ENCODE measurements at regions of chr6 and their contacts with region 1.

Region 1: DNA sequence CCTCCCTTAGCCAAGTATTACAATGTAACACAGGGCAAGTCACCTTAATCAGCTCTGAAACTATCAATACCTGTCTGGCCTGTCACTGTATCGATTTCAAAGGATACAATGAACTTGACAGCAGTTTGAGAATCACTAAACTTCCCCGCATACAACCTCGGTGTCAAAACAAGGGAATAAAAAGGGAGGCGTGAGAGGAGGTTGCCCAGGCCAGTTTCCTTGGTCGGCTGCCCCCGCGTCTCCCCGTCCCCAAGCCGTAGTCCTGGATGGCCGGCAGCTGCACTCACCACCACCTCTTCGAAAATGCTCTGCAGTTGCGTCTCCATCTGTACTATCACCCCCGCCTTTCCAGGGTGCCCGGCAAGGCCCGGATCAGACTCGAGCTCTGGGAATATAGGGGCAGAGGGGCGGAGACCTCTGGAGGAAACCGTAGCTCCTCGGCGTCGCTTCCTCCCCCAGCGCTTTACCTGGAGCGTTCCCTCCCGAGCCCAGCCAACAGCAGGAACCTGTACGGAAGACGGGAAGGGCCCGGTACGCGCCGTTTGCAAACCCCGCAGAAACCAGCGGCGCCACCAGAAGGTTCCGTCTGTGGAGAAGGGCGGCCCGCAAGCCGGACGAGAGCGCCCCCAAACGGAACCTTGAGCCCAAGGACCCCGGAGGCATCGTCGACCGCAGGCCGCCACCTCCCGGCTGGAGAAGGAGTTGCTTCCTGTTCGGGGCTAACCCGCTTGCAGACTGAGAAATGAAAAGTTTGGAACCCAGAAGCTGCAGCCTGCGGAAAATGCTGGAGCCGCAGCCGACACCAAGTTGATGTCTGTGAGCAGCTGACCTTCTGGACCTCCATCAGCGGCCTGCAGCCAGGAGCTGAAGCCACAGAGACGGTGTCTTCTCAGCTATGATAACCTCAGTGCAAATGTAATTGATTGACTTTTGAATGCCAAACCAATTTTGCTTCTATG is at the start of gene MED23:
- DNase-seq: peak; percentile 92 to 99 (median 95)
- ATAC-seq: peak; percentile 94
- H3K4me3 ChIP-seq: peak within 1 kb of the TSS; percentile 83 to 86
- H3K4me3 Mint-ChIP-seq: peak within 1 kb of the TSS; percentile 98
- H3K27ac ChIP-seq: peak within 1 kb of the TSS; percentile 62 to 72
- H3K27ac Mint-ChIP-seq: peak within 1 kb of the TSS; percentile 94
- H3K4me1 ChIP-seq: peaks cover 18% of the 10 kb centered on the region
- H3K4me1 Mint-ChIP-seq: peaks cover 32% of the 10 kb centered on the region
- H3K27me3 ChIP-seq: no peaks in the 10 kb centered on the region
- H3K27me3 Mint-ChIP-seq: no peaks in the 10 kb centered on the region
- CTCF ChIP-seq: peak; percentile 95
- total RNA-seq, gene MED23: 65.3 to 70.0 TPM

Region 2: DNA sequence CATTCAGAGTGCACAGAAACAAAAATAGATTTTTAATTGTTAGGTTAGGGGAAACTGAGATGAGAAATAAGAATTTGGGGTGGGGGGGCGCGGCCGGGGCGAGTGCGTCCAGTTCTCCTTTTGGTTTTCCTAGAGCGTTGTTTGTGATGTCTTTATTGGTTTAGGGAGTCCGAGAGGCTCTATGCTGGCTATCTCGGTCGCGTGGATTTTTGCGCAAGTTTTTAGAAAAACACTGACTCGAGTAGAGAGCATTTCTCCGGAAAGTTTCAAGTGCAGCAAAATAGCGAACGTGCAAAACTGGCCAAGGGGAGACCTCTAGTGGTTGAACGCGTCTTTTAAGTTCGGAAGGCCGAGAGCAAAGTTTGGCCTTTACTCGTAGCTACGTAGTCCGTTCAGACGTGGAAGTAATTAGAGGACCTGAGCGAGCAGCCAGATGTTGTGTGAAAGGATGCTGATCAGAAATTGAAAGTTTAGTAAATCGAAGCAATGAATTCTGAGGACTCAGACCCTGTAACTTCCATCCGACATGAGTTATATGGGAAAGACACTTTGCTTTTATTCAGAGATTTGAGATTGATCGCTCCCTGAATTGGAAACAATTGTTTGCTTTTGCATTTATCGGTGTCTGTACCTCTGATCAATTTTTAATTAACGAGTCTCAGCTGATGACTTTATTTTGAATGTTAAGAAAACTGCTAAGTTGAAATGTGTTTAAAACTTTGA is 1606.9 kb before region 1 on chr6:
- CTCF ChIA-PET with region 1: no interaction called
- POLR2A ChIA-PET with region 1: no interaction called
- intact Hi-C with region 1: loop called in 1 of 2 experiments (anchors 5 kb)
- DNase-seq: peak; percentile 57 to 93 (median 78)
- ATAC-seq: peak; percentile 45
- H3K4me3 ChIP-seq: peak overlapping the region; percentile 61 to 85
- H3K4me3 Mint-ChIP-seq: peak overlapping the region; percentile 98
- H3K27ac ChIP-seq: peak overlapping the region; percentile 60 to 82
- H3K27ac Mint-ChIP-seq: peak overlapping the region; percentile 96
- H3K4me1 ChIP-seq: peaks cover 11% of the 10 kb centered on the region
- H3K4me1 Mint-ChIP-seq: peaks cover 43% of the 10 kb centered on the region
- H3K27me3 ChIP-seq: no peaks in the 10 kb centered on the region
- H3K27me3 Mint-ChIP-seq: no peaks in the 10 kb centered on the region
- CTCF ChIP-seq: peak; percentile 63

Region 3: GRCh38 chr6:131063028-131063763 is 564.8 kb before region 1 on chr6 and contains the start of gene EPB41L2:
- CTCF ChIA-PET with region 1: no interaction called
- POLR2A ChIA-PET with region 1: interaction called, 5 read pairs
- intact Hi-C with region 1: loop called (anchors 1 to 5 kb)
- DNase-seq: peak; percentile 55 to 92 (median 79)
- ATAC-seq: peak; percentile 91
- H3K4me3 ChIP-seq: peak within 1 kb of the TSS; percentile 57 to 80
- H3K4me3 Mint-ChIP-seq: peak within 1 kb of the TSS; percentile 89
- H3K27ac ChIP-seq: peak within 1 kb of the TSS in 1 of 2 experiments; percentile 49
- H3K27ac Mint-ChIP-seq: peak within 1 kb of the TSS; percentile 76
- H3K4me1 ChIP-seq: peaks cover 10% of the 10 kb centered on the region
- H3K4me1 Mint-ChIP-seq: peaks cover 27% of the 10 kb centered on the region
- H3K27me3 ChIP-seq: no peaks in the 10 kb centered on the region
- H3K27me3 Mint-ChIP-seq: no peaks in the 10 kb centered on the region
- CTCF ChIP-seq: peak; percentile 18
- total RNA-seq, gene EPB41L2: 11.0 to 12.0 TPM

Region 4: GRCh38 chr6:131182991-131183425 is 445.0 kb before region 1 on chr6:
- CTCF ChIA-PET with region 1: interaction called, 7 read pairs
- POLR2A ChIA-PET with region 1: interaction called, 3 read pairs
- intact Hi-C with region 1: loop called in 1 of 2 experiments (anchors 1 kb)
- DNase-seq: peak in 6 of 9 experiments; percentile 9 to 68 (median 40)
- ATAC-seq: peak; percentile 66
- H3K4me3 ChIP-seq: no peak overlapping the region
- H3K4me3 Mint-ChIP-seq: peak overlapping the region; percentile 69
- H3K27ac ChIP-seq: peak overlapping the region in 1 of 2 experiments; percentile 23
- H3K27ac Mint-ChIP-seq: peak overlapping the region; percentile 89
- H3K4me1 ChIP-seq: peaks cover 11% of the 10 kb centered on the region
- H3K4me1 Mint-ChIP-seq: peaks cover 13% of the 10 kb centered on the region
- H3K27me3 ChIP-seq: no peaks in the 10 kb centered on the region
- H3K27me3 Mint-ChIP-seq: no peaks in the 10 kb centered on the region
- CTCF ChIP-seq: peak; percentile 63

Region 5: GRCh38 chr6:131586543-131586942 is 41.5 kb before region 1 on chr6:
- CTCF ChIA-PET with region 1: interaction called, 9 read pairs
- POLR2A ChIA-PET with region 1: no interaction called
- intact Hi-C with region 1: loop called in 1 of 2 experiments (anchors 5 kb)
- DNase-seq: no peak
- ATAC-seq: no peak
- H3K4me3 ChIP-seq: no peak overlapping the region
- H3K4me3 Mint-ChIP-seq: no peak overlapping the region
- H3K27ac ChIP-seq: no peak overlapping the region
- H3K27ac Mint-ChIP-seq: no peak overlapping the region
- H3K4me1 ChIP-seq: no peaks in the 10 kb centered on the region
- H3K4me1 Mint-ChIP-seq: no peaks in the 10 kb centered on the region
- H3K27me3 ChIP-seq: no peaks in the 10 kb centered on the region
- H3K27me3 Mint-ChIP-seq: no peaks in the 10 kb centered on the region
- CTCF ChIP-seq: no peak

Region 6: GRCh38 chr6:131615275-131615674 is 12.7 kb before region 1 on chr6:
- CTCF ChIA-PET with region 1: interaction called, 25 read pairs
- POLR2A ChIA-PET with region 1: interaction called, 4 read pairs
- intact Hi-C with region 1: no loop called
- DNase-seq: no peak
- ATAC-seq: no peak
- H3K4me3 ChIP-seq: no peak overlapping the region
- H3K4me3 Mint-ChIP-seq: no peak overlapping the region
- H3K27ac ChIP-seq: no peak overlapping the region
- H3K27ac Mint-ChIP-seq: peak overlapping the region; percentile 73
- H3K4me1 ChIP-seq: no peaks in the 10 kb centered on the region
- H3K4me1 Mint-ChIP-seq: peaks cover 7% of the 10 kb centered on the region
- H3K27me3 ChIP-seq: no peaks in the 10 kb centered on the region
- H3K27me3 Mint-ChIP-seq: no peaks in the 10 kb centered on the region
- CTCF ChIP-seq: no peak

Region 7: GRCh38 chr6:132247381-132248159 is 619.6 kb after region 1 on chr6:
- CTCF ChIA-PET with region 1: no interaction called
- POLR2A ChIA-PET with region 1: no interaction called
- intact Hi-C with region 1: no loop called
- DNase-seq: no peak
- ATAC-seq: no peak
- H3K4me3 ChIP-seq: no peak overlapping the region
- H3K4me3 Mint-ChIP-seq: no peak overlapping the region
- H3K27ac ChIP-seq: no peak overlapping the region
- H3K27ac Mint-ChIP-seq: no peak overlapping the region
- H3K4me1 ChIP-seq: no peaks in the 10 kb centered on the region
- H3K4me1 Mint-ChIP-seq: no peaks in the 10 kb centered on the region
- H3K27me3 ChIP-seq: no peaks in the 10 kb centered on the region
- H3K27me3 Mint-ChIP-seq: peaks cover 9% of the 10 kb centered on the region
- CTCF ChIP-seq: no peak

Region 8: DNA sequence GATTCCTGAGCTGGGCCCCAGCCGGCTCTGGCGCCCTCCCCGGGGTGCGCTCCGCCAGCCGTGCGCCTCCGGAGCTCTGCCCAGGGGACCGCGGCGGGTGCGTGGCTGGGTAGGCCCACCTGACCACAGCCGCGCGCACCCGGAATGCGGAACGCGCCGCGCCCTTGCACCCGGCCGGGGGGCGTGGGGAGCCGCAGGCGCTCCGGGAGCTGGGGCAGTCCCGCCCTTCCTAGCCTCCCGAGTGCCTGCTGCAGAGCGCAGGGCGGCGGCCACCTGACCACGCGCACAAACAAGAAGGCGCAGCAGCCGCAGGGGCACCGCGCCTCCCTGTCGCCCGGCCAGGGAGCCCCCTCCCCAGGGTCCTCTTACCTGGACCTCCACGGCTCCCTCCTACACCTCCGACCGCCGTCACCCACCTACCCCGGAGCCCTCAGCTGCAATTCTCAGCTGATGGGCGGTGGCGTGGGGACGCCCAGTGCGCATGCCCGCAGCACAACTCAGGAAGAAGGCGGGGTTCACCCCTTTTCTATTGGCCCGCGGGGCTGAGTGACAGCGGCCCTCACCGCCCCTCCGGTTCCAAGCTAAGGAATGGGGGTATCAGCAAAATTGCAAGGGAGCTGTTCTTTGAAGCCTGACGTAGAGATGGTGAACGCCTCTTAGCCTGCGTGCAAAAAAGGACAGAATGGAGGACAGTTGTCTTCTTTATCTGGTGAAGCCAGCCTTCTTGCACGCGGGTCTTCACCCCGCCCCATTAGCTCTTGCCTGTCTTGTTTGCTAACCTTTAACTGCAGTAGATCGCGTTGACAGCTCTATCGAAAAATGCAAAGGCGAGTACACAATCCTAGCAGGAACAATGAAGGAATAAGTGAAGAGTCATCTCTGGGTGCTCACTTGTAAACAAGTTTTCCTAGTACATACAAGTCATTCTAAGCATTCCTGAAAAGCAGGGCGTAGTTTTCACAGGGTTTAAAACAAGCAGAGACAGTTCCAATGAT is 884.9 kb after region 1 on chr6 and contains the start of gene STX7:
- CTCF ChIA-PET with region 1: no interaction called
- POLR2A ChIA-PET with region 1: no interaction called
- intact Hi-C with region 1: loop called in 1 of 2 experiments (anchors 5 kb)
- DNase-seq: peak; percentile 67 to 91 (median 85)
- ATAC-seq: peak; percentile 93
- H3K4me3 ChIP-seq: peak within 1 kb of the TSS; percentile 75 to 90
- H3K4me3 Mint-ChIP-seq: peak within 1 kb of the TSS; percentile 97
- H3K27ac ChIP-seq: peak within 1 kb of the TSS; percentile 43 to 57
- H3K27ac Mint-ChIP-seq: peak within 1 kb of the TSS; percentile 91
- H3K4me1 ChIP-seq: peaks cover 8% of the 10 kb centered on the region
- H3K4me1 Mint-ChIP-seq: peaks cover 35% of the 10 kb centered on the region
- H3K27me3 ChIP-seq: no peaks in the 10 kb centered on the region
- H3K27me3 Mint-ChIP-seq: no peaks in the 10 kb centered on the region
- CTCF ChIP-seq: no peak
- total RNA-seq, gene STX7: 5.4 to 5.5 TPM

Region 9: DNA sequence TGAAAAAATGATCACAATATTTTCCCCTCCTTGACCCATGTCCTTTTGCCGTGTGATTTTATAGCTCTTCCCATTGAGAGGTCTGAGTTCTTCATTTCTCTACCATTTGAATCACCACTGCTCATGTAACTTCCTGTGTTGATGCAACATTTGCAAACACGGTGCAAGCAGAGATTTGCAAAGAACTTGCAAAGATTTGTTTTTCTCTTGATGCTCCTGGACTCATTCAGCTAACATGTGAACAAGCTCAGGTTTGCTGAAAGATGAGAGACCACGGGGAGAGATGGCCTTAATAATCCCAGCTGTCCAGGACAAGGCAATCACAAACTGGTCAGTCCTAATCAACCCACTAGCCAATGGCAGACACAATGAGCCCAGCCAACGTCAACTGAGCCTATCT is 1121.1 kb after region 1 on chr6:
- CTCF ChIA-PET with region 1: no interaction called
- POLR2A ChIA-PET with region 1: no interaction called
- intact Hi-C with region 1: no loop called
- DNase-seq: peak in 1 of 9 experiments; percentile 18
- ATAC-seq: no peak
- H3K4me3 ChIP-seq: no peak overlapping the region
- H3K4me3 Mint-ChIP-seq: no peak overlapping the region
- H3K27ac ChIP-seq: peak overlapping the region in 1 of 2 experiments; percentile 31
- H3K27ac Mint-ChIP-seq: peak overlapping the region; percentile 46
- H3K4me1 ChIP-seq: no peaks in the 10 kb centered on the region
- H3K4me1 Mint-ChIP-seq: peaks cover 19% of the 10 kb centered on the region
- H3K27me3 ChIP-seq: no peaks in the 10 kb centered on the region
- H3K27me3 Mint-ChIP-seq: no peaks in the 10 kb centered on the region
- CTCF ChIP-seq: no peak

Measured in CD8-positive, alpha-beta T cell (primary cell).